Heart left ventricle (tissue), 16 donors: ENCODE measurements at regions of chr3 and their contacts with region 1.

Region 1: DNA sequence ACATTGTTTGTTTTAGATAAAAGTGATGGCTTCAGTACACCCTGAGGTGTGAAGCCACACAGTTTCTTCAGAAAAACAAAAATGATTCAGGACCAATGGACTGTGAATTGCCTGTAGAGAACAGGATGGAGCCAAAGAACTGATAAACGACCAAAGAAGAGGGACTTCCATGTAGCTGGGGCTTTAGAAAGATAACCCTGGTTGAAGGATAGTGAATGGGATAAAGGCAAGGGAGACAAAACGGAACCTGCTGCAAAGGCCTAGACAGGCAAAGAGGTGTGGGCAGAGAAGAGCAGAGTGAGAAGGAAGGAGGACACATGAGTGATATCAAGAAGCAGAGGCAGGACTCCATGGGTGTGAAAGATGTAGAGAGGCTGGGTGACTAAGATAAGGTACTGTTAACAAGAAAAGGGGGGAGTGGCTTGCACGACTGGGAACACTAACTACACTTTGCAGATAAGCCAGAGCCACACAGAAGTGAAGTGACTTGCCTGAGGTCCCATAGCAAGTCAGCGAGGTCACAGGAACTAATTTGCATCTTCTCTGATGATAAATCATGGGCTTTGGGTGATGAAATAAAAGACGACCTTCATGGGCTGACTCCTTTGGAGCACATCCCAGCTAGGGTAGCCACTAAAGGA is 44.3 kb downstream of the RAB6B start:
- DNase-seq: no peak
- ATAC-seq: no peak
- H3K4me3 ChIP-seq: no peak overlapping the region
- H3K27ac ChIP-seq: no peak overlapping the region
- H3K4me1 ChIP-seq: peaks cover 0 to 33% (median 13%) of the 10 kb centered on the region in 12 donors
- H3K27me3 ChIP-seq: no peaks in the 10 kb centered on the region
- CTCF ChIP-seq: no peak
- POLR2A ChIP-seq: no peak

Region 2: DNA sequence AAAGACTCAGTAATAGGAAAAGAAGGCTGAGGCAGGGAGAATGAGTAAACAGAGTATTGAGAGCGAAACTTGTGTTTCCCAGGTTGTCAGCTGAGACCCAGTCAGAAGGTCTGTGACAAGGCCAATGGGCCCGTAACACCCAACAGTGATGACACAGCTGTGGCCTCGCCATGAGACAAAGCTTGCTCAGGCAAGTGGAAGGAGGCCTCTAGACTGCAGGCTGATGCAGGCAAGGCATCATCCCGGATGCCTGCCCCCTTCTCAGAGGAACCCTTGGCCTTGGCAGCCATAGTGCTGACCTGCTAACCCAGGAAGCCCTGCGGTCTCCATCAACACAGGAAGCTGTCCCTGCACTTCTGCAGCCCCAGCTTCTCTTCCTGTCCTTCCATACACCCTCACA is 28.9 kb after region 1 on chr3:
- intact Hi-C with region 1: loop called in 1 of 10 experiments (anchors 5 kb)
- DNase-seq: peak in 1 of 5 donors; percentile 15
- ATAC-seq: peak in 2 of 4 donors; percentile 8 to 45
- H3K4me3 ChIP-seq: no peak overlapping the region
- H3K27ac ChIP-seq: no peak overlapping the region
- H3K4me1 ChIP-seq: peaks cover 0 to 19% (median 4%) of the 10 kb centered on the region in 12 donors
- H3K27me3 ChIP-seq: no peaks in the 10 kb centered on the region
- CTCF ChIP-seq: no peak
- POLR2A ChIP-seq: no peak